Activated naive CD4-positive, alpha-beta T cell treated with anti-CD3 and anti-CD28 coated beads for 36 hours (primary cell): ENCODE measurements at regions of chr6 and their contacts with region 1.

Region 1: DNA sequence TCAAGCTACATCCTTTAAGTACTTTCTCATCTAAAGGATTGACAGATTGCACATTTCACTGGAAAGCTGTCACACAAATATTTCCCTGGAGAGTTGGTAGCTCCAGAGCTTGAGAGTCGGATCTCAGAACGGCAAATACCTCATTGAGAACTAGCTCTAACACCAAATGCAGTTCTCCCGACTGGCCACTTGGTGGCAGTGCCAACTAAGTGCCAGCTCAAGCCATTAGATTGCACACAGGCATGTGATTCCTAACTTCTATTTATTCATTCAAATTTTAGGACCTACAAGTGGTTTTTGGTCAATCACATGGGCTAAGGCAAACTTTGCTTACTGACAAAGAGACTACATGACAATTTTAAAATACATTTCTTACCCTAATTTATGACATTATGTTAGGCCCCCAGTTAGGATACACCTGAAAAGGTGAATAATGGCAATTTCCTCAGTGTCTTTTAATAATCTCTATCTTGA is 7.9 kb upstream of the MCHR2 start:
- DNase-seq: peak; percentile 51
- H3K4me3 Mint-ChIP-seq: no peak overlapping the region
- H3K27ac Mint-ChIP-seq: no peak overlapping the region
- H3K4me1 Mint-ChIP-seq: no peaks in the 10 kb centered on the region
- H3K27me3 Mint-ChIP-seq: peaks cover 18% of the 10 kb centered on the region

Region 2: DNA sequence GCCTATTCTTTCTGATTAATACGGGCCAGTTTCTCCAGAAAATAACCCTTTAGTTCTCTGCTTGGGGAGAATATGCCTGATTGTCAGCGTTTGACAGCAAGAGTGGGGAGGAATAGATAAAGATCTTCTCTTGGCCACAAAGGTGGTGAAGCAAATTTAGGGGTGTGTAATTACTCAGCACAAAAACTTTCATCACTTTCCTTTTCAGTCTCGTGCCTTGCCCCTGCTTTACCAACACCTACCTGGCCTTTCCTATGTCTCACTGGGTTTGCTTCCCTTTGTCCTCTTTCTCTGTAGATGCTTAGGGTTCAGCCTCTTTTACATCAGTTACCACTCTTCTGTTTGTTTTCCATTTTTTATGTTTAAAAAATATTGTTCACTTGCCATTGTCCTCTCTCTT is 107.1 kb before region 1 on chr6:
- CTCF ChIA-PET with region 1: no interaction called
- intact Hi-C with region 1: no loop called
- DNase-seq: no peak
- H3K4me3 Mint-ChIP-seq: no peak overlapping the region
- H3K27ac Mint-ChIP-seq: no peak overlapping the region
- H3K4me1 Mint-ChIP-seq: no peaks in the 10 kb centered on the region
- H3K27me3 Mint-ChIP-seq: peaks cover 8% of the 10 kb centered on the region

Region 3: GRCh38 chr6:100099189-100100074 is 97.5 kb after region 1 on chr6:
- CTCF ChIA-PET with region 1: interaction called, 46 read pairs
- intact Hi-C with region 1: loop called (anchors 1 kb)
- DNase-seq: no peak
- H3K4me3 Mint-ChIP-seq: no peak overlapping the region
- H3K27ac Mint-ChIP-seq: no peak overlapping the region
- H3K4me1 Mint-ChIP-seq: no peaks in the 10 kb centered on the region
- H3K27me3 Mint-ChIP-seq: no peaks in the 10 kb centered on the region